ENCODE measurements at regions of chr4 and their contacts with region 1.

Region 1: GRCh38 chr4:108917255-108917654 is 154.4 kb upstream of the ETNPPL start:
- DNase-seq: no peak
- H3K4me3 ChIP-seq: no peak overlapping the region
- H3K27ac ChIP-seq: no peak overlapping the region
- H3K4me1 ChIP-seq: no peaks in the 10 kb centered on the region
- H3K27me3 ChIP-seq: no peaks in the 10 kb centered on the region
- CTCF ChIP-seq: no peak
- EP300 ChIP-seq: no peak
- POLR2A ChIP-seq: no peak

Region 2: GRCh38 chr4:108172753-108173598 is 744.3 kb before region 1 on chr4:
- in situ Hi-C with region 1: no loop called
- intact Hi-C with region 1: loop called (anchors 5 kb)
- DNase-seq: peak; percentile 50
- H3K4me3 ChIP-seq: peak overlapping the region; percentile 28 to 63 (median 44)
- H3K27ac ChIP-seq: peak overlapping the region; percentile 4 to 32 (median 17)
- H3K4me1 ChIP-seq: peaks cover 0 to 42% (median 31%) of the 10 kb centered on the region in 4 donors
- H3K27me3 ChIP-seq: peaks cover 72% of the 10 kb centered on the region
- CTCF ChIP-seq: no peak
- EP300 ChIP-seq: no peak
- POLR2A ChIP-seq: no peak

Region 3: GRCh38 chr4:108877821-108878220 is 39.4 kb before region 1 on chr4:
- in situ Hi-C with region 1: no loop called
- intact Hi-C with region 1: loop called (anchors 1 kb)
- DNase-seq: no peak
- H3K4me3 ChIP-seq: no peak overlapping the region
- H3K27ac ChIP-seq: no peak overlapping the region
- H3K4me1 ChIP-seq: no peaks in the 10 kb centered on the region
- H3K27me3 ChIP-seq: no peaks in the 10 kb centered on the region
- CTCF ChIP-seq: no peak
- EP300 ChIP-seq: no peak
- POLR2A ChIP-seq: no peak

Region 4: DNA sequence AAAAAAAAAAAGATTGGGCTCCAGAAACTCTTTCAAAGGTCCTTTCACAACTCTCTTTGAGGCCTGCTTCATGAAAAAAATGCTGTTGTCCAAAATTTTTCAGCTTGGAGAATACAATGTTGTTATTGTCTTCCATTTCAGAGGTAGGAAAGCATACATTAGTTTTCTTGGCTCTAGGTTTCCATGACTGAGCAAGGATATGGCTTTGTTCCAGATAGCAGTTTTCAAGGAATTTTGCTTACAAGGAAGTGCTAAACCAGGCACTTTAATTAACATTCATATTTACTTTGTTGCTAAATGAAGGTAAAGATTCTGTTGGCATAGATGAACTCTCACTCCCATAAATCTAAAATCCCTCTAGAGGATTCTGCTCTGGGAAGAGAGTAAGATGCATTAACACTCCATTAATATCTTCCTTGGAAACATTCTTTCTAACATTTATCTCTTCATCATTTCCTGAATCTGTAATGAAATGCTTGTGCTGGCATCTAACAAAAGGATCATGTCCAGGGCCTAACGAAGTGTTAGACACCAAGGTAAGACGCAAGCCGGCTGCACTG is 266.8 kb after region 1 on chr4:
- in situ Hi-C with region 1: no loop called
- intact Hi-C with region 1: no loop called
- DNase-seq: no peak
- H3K4me3 ChIP-seq: no peak overlapping the region
- H3K27ac ChIP-seq: no peak overlapping the region
- H3K4me1 ChIP-seq: no peaks in the 10 kb centered on the region
- H3K27me3 ChIP-seq: no peaks in the 10 kb centered on the region
- CTCF ChIP-seq: no peak
- EP300 ChIP-seq: no peak
- POLR2A ChIP-seq: no peak

Measured in transverse colon (tissue), 4 donors.